Calu3 (cell line): ENCODE measurements at regions of chr2 and their contacts with region 1.

Region 1: DNA sequence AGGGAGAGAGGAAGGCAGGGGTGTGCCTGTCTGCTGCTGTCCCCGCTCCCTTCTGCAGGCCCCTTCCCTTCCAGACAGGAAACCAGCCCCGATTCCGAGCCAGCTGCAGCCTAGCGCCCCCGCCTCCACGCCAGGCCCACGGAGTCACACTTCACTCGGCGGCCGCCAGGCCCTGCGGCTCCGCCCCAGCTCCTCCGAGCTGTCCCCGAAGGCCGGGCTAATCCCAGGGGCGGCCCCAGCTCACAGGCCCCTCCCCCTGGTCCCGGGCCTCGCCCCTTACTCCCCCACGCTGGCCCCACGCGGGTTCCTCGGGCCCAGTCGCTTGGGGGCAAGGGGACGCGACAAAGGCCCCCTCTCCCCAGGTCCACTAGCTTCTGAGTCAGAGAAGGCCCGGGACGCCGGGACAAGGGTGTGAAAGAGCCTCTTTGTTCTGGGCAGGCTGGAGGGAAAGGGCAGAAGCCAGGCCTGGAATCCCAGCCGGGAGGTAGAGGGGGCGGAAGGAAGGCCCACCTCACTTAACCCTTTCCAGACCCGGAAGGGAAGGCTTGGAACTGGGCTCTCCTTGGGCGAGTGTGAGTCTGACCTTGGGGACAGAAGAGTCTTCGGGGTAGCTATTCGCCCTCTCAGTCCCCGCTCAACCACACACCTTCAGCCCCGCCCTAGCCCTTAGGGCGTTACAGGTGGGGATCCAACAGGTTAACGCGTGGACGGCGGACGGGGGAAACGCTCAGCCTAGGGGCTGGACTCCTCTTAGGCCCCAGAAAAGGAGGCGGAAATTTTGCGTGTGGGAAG is 1.2 kb downstream of the RTKN start:
- DNase-seq: peak; percentile 92
- H3K4me3 Mint-ChIP-seq: peak overlapping the region; percentile 97
- H3K27ac Mint-ChIP-seq: peak overlapping the region; percentile 100
- H3K4me1 Mint-ChIP-seq: peaks cover 47% of the 10 kb centered on the region
- H3K27me3 Mint-ChIP-seq: peaks cover 10% of the 10 kb centered on the region
- CTCF ChIP-seq: no peak

Region 2: GRCh38 chr2:74391580-74392448 is 48.8 kb before region 1 on chr2:
- CTCF ChIA-PET with region 1: no interaction called
- intact Hi-C with region 1: no loop called
- DNase-seq: peak; percentile 93
- H3K4me3 Mint-ChIP-seq: peak overlapping the region; percentile 74
- H3K27ac Mint-ChIP-seq: peak overlapping the region; percentile 86
- H3K4me1 Mint-ChIP-seq: peaks cover 8% of the 10 kb centered on the region
- H3K27me3 Mint-ChIP-seq: no peaks in the 10 kb centered on the region
- CTCF ChIP-seq: peak; percentile 83

Region 3: GRCh38 chr2:74454654-74455511 is 14.3 kb after region 1 on chr2 and contains the start of gene INO80B:
- CTCF ChIA-PET with region 1: interaction called, 5 read pairs
- intact Hi-C with region 1: loop called (anchors 2 kb)
- DNase-seq: peak; percentile 96
- H3K4me3 Mint-ChIP-seq: peak within 1 kb of the TSS; percentile 83
- H3K27ac Mint-ChIP-seq: peak within 1 kb of the TSS; percentile 35
- H3K4me1 Mint-ChIP-seq: peaks cover 44% of the 10 kb centered on the region
- H3K27me3 Mint-ChIP-seq: peaks cover 12% of the 10 kb centered on the region
- CTCF ChIP-seq: no peak
- total RNA-seq, gene INO80B: 41.7 and 42.1 TPM in 2 replicates

Region 4: GRCh38 chr2:74619651-74620297 is 179.2 kb after region 1 on chr2:
- CTCF ChIA-PET with region 1: no interaction called
- intact Hi-C with region 1: no loop called
- DNase-seq: no peak
- H3K4me3 Mint-ChIP-seq: no peak overlapping the region
- H3K27ac Mint-ChIP-seq: no peak overlapping the region
- H3K4me1 Mint-ChIP-seq: no peaks in the 10 kb centered on the region
- H3K27me3 Mint-ChIP-seq: peaks cover 22% of the 10 kb centered on the region
- CTCF ChIP-seq: no peak